Naive thymus-derived CD4-positive, alpha-beta T cell (primary cell): ENCODE measurements at regions of chr19 and their contacts with region 1.

Region 1: GRCh38 chr19:34145741-34146202 is 26.5 kb upstream of the LSM14A start:
- DNase-seq: peak; percentile 11 to 68 (median 60)
- ATAC-seq: peak; percentile 85
- H3K4me3 ChIP-seq: no peak overlapping the region
- H3K4me3 Mint-ChIP-seq: no peak overlapping the region
- H3K27ac ChIP-seq: no peak overlapping the region
- H3K27ac Mint-ChIP-seq: no peak overlapping the region
- H3K4me1 ChIP-seq: no peaks in the 10 kb centered on the region
- H3K4me1 Mint-ChIP-seq: peaks cover 0 to 4% (median 0%) of the 10 kb centered on the region in 7 donors
- H3K27me3 ChIP-seq: no peaks in the 10 kb centered on the region
- H3K27me3 Mint-ChIP-seq: peaks cover 0 to 2% (median 0%) of the 10 kb centered on the region in 5 donors

Region 2: DNA sequence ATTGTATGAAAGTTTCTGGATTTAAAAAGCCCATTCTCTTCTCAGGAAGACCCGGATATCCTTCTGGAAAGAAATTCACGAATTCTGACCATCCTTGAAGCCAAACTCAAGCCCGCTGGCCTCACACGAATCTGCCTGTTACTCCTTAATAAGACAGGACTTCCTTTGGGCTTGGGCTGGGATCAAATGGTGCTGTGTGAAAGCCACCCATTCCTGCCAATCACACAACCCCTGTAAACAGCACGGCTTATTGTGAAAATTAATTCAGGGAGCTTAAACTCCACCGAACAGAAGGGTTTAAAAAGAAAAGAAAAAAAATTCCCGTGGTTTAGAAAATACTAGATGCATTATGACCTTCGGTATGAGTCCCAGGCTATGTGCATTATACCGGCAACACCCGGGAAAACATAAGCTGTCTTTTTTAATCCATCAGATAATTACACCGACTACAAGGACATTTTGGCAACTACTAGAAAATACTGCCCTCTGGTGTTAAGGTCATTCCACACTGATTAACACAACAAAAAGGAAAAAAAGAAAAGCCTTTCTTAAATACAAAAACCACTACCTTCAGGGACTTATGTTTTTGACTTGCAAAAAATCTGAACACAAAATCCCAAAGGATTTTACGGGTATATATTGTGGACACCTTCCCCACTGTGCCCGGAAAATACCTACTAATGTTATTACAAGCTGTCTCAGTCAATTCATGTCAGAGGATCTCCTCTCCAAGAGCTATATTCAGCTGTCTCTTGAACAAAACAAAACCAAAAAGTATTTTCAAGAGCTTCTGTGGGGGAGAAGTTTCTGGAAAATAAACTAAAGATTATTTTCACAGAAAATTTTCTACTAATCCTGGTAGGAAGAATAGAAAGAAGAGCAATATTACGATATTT is 49.5 kb before region 1 on chr19:
- CTCF ChIA-PET with region 1: interaction called, 10 read pairs
- POLR2A ChIA-PET with region 1: no interaction called
- intact Hi-C with region 1: loop called in 1 of 2 experiments (anchors 1 kb)
- DNase-seq: peak in 5 of 9 donors; percentile 7 to 36 (median 25)
- ATAC-seq: peak; percentile 53
- H3K4me3 ChIP-seq: no peak overlapping the region
- H3K4me3 Mint-ChIP-seq: peak overlapping the region in 2 of 10 donors; percentile 49 to 56
- H3K27ac ChIP-seq: no peak overlapping the region
- H3K27ac Mint-ChIP-seq: peak overlapping the region in 1 of 9 donors; percentile 33
- H3K4me1 ChIP-seq: no peaks in the 10 kb centered on the region
- H3K4me1 Mint-ChIP-seq: peaks cover 0 to 5% (median 0%) of the 10 kb centered on the region in 7 donors
- H3K27me3 ChIP-seq: no peaks in the 10 kb centered on the region
- H3K27me3 Mint-ChIP-seq: peaks cover 5 to 27% (median 9%) of the 10 kb centered on the region in 5 donors

Region 3: DNA sequence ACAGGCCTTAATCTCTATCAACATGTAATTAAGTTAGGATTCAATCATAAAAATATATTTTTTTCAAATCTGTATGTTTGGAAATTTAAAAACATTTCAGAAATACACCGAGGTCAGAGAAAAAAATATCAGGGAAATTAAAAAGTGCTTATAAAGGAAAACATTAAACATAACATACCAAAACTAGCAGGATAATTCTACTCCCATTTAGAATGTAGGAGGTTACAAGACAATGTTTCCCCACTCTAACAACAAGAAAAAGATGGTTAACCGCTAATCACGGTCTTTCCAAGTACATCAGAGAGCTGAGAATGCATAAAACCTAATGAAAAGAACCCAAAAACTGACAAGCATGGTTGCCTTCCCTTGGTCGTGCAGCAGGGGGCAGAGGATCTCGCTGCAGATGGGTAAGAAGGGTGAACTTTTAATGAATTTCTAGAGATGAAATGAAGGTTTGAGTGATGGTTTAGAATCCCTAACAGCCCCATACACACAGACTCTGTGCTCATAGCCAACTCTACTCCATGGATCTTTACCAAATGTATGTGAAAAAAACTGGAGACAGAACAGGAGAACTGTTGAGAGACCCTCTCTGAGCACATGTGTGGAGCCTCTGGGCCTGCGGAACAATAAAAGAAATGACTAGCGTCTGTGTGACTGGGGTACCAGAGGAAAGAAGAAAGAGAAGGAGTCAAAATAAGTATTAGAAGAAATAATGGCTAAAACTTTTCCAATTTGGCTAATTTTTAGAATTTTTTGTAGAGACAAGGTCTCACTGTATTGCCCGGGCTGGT is 24.7 kb before region 1 on chr19:
- CTCF ChIA-PET with region 1: interaction called, 20 read pairs
- POLR2A ChIA-PET with region 1: no interaction called
- intact Hi-C with region 1: loop called (anchors 1 kb)
- DNase-seq: peak in 8 of 9 donors; percentile 38 to 57 (median 50)
- ATAC-seq: peak; percentile 76
- H3K4me3 ChIP-seq: no peak overlapping the region
- H3K4me3 Mint-ChIP-seq: no peak overlapping the region
- H3K27ac ChIP-seq: no peak overlapping the region
- H3K27ac Mint-ChIP-seq: peak overlapping the region in 3 of 9 donors; percentile 8 to 39 (median 9)
- H3K4me1 ChIP-seq: peaks cover 0 to 11% of the 10 kb centered on the region in 2 donors
- H3K4me1 Mint-ChIP-seq: peaks cover 2 to 33% (median 26%) of the 10 kb centered on the region in 7 donors
- H3K27me3 ChIP-seq: no peaks in the 10 kb centered on the region
- H3K27me3 Mint-ChIP-seq: peaks cover 0 to 13% (median 0%) of the 10 kb centered on the region in 5 donors

Region 4: DNA sequence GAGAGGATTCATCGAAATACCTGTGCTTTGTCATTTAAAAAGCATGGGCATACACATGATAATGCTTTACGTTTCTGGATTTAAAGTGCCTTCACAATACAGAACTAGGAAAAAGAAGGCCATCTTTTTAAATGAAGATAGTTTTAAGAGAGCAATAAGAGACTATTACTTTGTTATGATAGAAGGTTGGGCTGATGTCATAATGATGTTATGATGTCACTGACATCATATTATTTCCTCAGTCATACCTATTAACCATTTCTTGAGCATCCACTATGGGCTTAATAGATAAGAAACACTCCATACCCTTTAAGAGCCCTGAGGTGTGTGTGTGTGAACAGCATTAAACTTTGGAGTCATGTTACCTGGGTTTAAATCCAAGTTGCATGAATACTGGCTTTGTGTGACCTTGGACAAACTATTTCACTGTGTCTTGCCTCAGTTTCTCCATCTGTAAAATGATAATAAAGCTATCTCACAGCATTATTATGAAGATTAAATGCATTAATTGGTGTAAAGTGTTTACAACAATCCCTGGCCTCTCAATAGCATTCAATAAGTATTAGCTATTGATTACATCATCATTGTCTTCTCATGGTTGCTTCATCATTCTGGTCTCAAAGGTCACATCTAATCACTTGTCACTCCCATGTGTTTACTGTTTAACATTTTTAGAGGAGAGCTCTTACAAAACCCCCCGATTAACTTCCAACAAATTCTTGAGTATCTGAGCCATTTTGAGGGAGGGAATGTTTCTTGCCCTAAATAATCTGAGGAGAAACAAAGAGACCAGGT is 599.3 kb after region 1 on chr19:
- CTCF ChIA-PET with region 1: no interaction called
- POLR2A ChIA-PET with region 1: no interaction called
- intact Hi-C with region 1: no loop called
- DNase-seq: no peak
- ATAC-seq: no peak
- H3K4me3 ChIP-seq: no peak overlapping the region
- H3K4me3 Mint-ChIP-seq: no peak overlapping the region
- H3K27ac ChIP-seq: no peak overlapping the region
- H3K27ac Mint-ChIP-seq: no peak overlapping the region
- H3K4me1 ChIP-seq: no peaks in the 10 kb centered on the region
- H3K4me1 Mint-ChIP-seq: no peaks in the 10 kb centered on the region
- H3K27me3 ChIP-seq: no peaks in the 10 kb centered on the region
- H3K27me3 Mint-ChIP-seq: no peaks in the 10 kb centered on the region